MCF 10A (cell line): ENCODE measurements at regions of chr12 and their contacts with region 1.

Region 1: GRCh38 chr12:112992541-112993398 is 14.5 kb downstream of the OAS2 start:
- DNase-seq: peak; percentile 78
- H3K4me3 Mint-ChIP-seq: no peak overlapping the region
- H3K27ac Mint-ChIP-seq: no peak overlapping the region
- H3K4me1 Mint-ChIP-seq: no peaks in the 10 kb centered on the region
- H3K27me3 Mint-ChIP-seq: no peaks in the 10 kb centered on the region
- CTCF ChIP-seq: peak; percentile 95

Region 2: GRCh38 chr12:112900299-112901145 is 92.2 kb before region 1 on chr12:
- CTCF ChIA-PET with region 1: interaction called, 29 read pairs
- POLR2A ChIA-PET with region 1: interaction called, 3 read pairs
- intact Hi-C with region 1: loop called (anchors 1 kb)
- DNase-seq: peak; percentile 74
- H3K4me3 Mint-ChIP-seq: no peak overlapping the region
- H3K27ac Mint-ChIP-seq: no peak overlapping the region
- H3K4me1 Mint-ChIP-seq: peaks cover 33% of the 10 kb centered on the region
- H3K27me3 Mint-ChIP-seq: peaks cover 28% of the 10 kb centered on the region
- CTCF ChIP-seq: peak; percentile 64

Region 3: DNA sequence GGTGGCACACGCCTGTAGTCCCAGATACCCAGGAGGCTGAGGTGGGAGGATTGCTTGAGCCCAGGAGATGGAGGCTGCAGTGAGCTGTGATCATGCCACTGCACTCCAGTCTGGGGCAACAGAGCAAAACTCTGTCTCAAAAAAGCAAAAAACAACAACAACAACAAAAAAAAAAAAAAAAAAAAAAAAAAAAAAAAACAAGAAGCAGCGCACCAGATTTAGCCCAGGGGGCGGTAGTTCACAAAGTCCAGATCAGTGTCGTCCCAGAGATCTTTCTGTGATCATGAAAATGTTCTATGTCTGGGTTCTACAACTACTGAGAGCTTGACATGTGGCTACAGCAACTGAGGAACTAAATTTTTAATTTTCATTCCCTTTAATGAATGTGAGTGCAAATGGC is 13.0 kb after region 1 on chr12:
- CTCF ChIA-PET with region 1: interaction called, 35 read pairs
- POLR2A ChIA-PET with region 1: no interaction called
- intact Hi-C with region 1: no loop called
- DNase-seq: peak; percentile 46
- H3K4me3 Mint-ChIP-seq: no peak overlapping the region
- H3K27ac Mint-ChIP-seq: no peak overlapping the region
- H3K4me1 Mint-ChIP-seq: peaks cover 7% of the 10 kb centered on the region
- H3K27me3 Mint-ChIP-seq: no peaks in the 10 kb centered on the region
- CTCF ChIP-seq: peak; percentile 31

Region 4: DNA sequence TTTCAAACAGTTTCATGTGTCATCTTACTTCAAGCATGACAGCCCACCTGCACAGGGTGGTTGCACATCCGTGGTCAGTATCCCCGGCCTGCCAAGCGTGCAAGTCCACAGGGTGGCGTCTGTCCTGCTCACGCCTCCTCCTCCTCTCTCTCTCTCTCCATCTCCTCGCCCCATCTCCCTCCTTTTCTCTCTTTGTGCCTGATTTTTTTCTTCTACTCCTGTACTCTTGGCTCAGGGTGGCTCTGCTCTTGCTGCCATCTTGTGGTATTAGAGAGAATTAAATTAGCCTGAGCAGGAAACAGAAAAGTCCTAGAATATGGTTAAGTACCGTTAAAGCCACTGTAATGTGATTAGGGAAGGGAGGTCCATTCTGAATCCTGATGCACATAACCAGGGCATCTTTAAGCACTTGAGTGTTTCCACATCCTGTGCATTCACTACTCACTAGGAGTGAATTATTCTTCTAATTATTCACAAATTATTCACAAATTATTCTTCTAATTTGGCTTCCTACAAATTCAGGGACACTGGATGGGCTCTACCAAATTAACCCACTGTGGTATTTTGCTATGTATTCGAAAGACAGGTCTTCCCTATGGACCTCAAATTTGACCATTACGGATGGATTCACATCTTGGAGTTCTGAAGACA is 38.2 kb after region 1 on chr12:
- CTCF ChIA-PET with region 1: interaction called, 168 read pairs
- POLR2A ChIA-PET with region 1: interaction called, 5 read pairs
- intact Hi-C with region 1: loop called (anchors 1 kb)
- DNase-seq: peak; percentile 75
- H3K4me3 Mint-ChIP-seq: no peak overlapping the region
- H3K27ac Mint-ChIP-seq: no peak overlapping the region
- H3K4me1 Mint-ChIP-seq: peaks cover 6% of the 10 kb centered on the region
- H3K27me3 Mint-ChIP-seq: no peaks in the 10 kb centered on the region
- CTCF ChIP-seq: peak; percentile 55

Region 5: DNA sequence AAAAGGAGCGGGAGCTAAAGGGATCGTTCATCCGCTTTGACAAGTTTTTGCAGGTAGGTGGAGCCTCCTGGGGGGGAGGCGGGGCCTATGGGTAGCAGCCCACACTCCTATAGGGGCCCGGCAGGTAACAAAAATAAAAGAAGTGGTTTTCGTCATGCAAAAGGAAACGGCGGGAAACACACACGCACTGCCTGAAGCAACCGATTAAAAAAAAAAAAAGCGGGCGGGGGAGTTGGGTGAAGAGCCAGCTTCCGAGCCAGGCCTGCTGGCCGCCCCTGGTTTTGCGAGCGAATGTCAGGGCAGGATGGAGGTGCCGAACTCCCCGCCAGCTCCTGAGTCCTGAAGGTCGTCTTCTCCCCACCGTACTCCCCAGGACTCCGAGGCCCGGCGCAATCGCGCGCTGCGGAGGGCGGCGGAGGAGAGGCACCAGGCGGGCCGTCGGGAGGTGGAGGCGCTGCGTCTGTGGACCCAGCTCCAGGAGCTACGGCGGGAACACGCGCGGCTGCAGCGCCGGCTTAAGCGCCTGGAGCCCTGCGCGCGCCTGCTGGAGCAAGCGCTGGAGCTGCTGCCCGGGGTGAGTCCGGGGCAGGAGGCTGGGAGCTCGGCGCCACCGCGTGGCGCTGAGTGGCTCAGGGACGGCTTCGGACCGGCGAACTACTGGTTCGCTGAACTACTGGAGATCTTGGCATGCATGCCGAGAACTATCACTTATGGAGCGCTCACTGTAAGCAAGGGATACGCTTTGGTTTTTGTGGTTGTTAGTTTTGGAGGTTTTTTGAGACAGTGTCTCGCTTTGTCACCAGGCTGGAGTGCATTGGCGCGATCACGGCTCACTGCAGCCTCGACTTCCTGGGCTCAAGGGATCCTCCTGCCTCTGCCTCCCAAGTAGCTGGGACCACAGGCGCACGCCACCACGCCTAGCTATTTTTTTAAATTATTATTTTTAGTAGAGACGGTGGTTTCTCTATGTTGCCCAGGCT is 160.4 kb after region 1 on chr12:
- CTCF ChIA-PET with region 1: interaction called, 8 read pairs
- POLR2A ChIA-PET with region 1: interaction called, 4 read pairs
- intact Hi-C with region 1: loop called (anchors 1 kb)
- DNase-seq: peak; percentile 76
- H3K4me3 Mint-ChIP-seq: peak overlapping the region; percentile 65
- H3K27ac Mint-ChIP-seq: no peak overlapping the region
- H3K4me1 Mint-ChIP-seq: peaks cover 12% of the 10 kb centered on the region
- H3K27me3 Mint-ChIP-seq: peaks cover 14% of the 10 kb centered on the region
- CTCF ChIP-seq: peak; percentile 38

Region 6: DNA sequence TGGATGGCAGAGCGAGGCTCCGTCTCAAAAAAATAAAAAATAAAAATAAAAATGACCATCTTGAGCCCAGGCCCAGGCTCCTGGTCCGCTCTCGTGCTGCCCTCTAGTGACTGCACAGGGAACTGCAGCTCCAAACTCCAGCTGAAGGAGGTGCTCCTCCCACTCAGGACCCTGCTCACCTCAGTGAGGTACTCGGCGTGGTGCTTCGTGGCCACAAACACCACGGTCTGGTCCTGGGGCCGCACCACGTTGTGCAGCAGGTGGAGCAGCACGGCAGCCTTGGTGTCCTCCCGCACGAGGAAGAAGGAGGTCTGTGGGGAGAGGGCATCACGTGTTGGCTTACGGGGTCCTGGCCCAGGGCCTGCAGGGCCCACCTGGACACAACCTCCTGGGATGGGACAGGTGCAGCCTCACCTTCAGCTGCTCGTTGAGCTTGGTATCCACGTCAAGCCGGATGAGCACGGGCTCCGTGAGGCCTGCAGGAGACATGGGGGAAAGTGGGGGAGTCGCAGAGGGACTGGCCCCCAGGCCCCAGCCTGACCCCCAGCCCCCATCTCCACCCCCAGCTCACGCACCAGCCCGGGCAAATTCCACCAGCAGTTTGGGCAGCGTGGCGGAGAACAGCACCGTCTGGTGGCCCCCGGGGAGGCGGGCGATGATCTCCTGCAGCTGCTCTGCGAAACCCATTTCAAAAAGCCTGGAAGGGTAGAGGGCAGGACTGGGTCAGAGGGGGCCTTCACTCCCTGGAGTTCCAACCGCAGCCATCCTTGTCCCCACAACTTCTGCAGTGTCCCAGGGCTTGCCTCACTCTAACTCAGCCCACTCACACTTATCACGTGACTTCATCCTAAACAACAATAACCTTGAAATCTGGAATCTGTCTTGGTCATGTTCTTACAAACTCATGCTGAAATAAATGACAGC is 182.0 kb after region 1 on chr12:
- CTCF ChIA-PET with region 1: interaction called, 48 read pairs
- POLR2A ChIA-PET with region 1: no interaction called
- intact Hi-C with region 1: loop called (anchors 1 kb)
- DNase-seq: peak; percentile 67
- H3K4me3 Mint-ChIP-seq: no peak overlapping the region
- H3K27ac Mint-ChIP-seq: peak overlapping the region; percentile 14
- H3K4me1 Mint-ChIP-seq: peaks cover 5% of the 10 kb centered on the region
- H3K27me3 Mint-ChIP-seq: no peaks in the 10 kb centered on the region
- CTCF ChIP-seq: peak; percentile 96